ENCODE measurements at regions of chr7 and their contacts with region 1.

Region 1: DNA sequence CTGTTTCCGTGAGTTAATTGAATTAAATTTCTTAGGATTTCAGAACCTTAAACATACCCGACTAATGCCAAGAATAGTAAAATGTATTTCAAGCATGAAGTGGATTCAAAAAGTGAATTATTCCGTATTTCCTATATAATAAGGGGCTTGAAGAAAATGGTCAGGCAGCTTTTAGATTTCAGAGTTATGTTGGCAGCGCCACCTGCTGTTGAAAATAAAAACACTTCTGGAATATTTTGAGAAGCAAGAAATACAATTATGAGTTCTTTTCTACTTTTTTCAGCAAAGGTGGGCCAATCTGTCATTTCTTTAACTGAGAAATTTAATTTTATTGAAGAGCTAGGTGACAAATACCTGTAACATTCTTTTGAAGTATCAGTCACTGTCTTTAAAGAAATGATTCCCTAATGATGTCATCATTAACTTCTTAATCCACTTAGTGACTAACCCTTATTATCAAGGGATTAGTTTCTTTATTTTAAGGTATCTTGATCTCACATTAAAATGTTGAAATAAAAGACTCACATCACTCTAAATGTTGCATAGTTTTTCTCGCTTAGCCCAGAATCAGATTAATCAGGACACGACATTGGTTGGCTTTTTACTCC is 36.6 kb upstream of the AGR3 start:
- DNase-seq: peak in 4 of 14 experiments; percentile 29 to 51 (median 39)
- ATAC-seq: no peak
- H3K4me3 ChIP-seq: no peak overlapping the region
- H3K4me3 Mint-ChIP-seq: no peak overlapping the region
- H3K27ac ChIP-seq: no peak overlapping the region
- H3K27ac Mint-ChIP-seq: no peak overlapping the region
- H3K4me1 ChIP-seq: no peaks in the 10 kb centered on the region
- H3K4me1 Mint-ChIP-seq: peaks cover 8% of the 10 kb centered on the region
- H3K27me3 ChIP-seq: no peaks in the 10 kb centered on the region
- H3K27me3 Mint-ChIP-seq: no peaks in the 10 kb centered on the region
- CTCF ChIP-seq: peak; percentile 80

Region 2: DNA sequence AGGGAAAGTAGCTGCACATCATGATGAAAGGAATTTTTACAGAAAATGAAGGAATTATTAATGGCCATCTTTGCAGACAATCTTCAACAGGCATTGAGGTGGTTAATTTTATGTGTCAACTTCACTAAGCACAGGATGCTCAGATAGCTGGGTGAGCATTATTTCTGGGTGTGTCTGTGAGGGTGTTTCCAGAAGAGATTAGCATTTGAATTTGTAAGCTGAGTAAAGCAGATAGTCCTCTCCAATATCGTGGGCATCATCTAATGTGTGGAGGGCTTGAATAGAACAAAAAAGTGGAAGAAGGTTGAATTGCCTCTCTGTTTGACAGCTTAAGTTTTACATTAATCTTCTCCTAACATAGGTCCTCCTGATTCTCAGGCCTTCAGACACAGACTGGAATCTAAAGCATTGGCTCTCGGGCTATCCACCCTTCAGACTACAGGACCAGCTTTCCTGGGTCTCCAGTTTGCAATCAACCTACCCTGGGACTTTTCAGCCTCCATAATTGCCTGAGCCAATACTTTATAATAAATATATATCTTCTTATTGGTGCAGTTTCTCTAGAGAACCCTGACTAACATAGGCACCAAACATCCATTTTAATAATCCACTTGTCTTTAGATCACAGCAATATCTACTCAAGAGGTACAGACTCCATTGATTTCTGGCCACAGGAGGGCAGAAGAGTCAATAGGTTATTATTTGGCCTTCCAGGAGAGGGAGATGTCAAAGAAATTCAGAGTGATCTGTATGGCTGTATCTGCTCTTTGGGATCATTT is 486.6 kb before region 1 on chr7:
- CTCF ChIA-PET with region 1: no interaction called
- POLR2A ChIA-PET with region 1: no interaction called
- intact Hi-C with region 1: loop called in 1 of 2 experiments (anchors 5 kb)
- DNase-seq: peak in 6 of 14 experiments; percentile 1 to 62 (median 42)
- ATAC-seq: peak; percentile 81
- H3K4me3 ChIP-seq: no peak overlapping the region
- H3K4me3 Mint-ChIP-seq: no peak overlapping the region
- H3K27ac ChIP-seq: no peak overlapping the region
- H3K27ac Mint-ChIP-seq: no peak overlapping the region
- H3K4me1 ChIP-seq: no peaks in the 10 kb centered on the region
- H3K4me1 Mint-ChIP-seq: no peaks in the 10 kb centered on the region
- H3K27me3 ChIP-seq: no peaks in the 10 kb centered on the region
- H3K27me3 Mint-ChIP-seq: no peaks in the 10 kb centered on the region
- CTCF ChIP-seq: peak; percentile 60

Region 3: DNA sequence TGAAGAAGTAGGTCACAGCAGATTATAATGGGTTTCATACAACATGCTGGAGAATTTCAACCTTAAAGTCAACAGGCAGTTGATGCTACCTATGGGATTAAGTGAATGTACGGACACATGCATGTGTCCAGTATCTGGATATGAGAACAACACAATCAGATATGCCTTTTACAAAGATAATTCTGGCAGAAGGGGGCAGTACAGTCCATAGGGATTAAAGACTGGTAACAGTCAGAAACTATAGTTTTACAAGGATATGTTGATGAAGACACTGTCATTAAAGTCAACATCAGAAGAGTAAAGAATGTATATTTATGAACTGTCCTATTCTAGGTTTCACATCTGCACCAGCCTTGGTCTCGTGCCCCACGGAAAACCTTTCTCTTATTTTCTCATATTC is 314.3 kb before region 1 on chr7:
- CTCF ChIA-PET with region 1: no interaction called
- POLR2A ChIA-PET with region 1: no interaction called
- intact Hi-C with region 1: loop called in 1 of 2 experiments (anchors 2 kb)
- DNase-seq: peak in 2 of 14 experiments; percentile 9 to 11
- ATAC-seq: no peak
- H3K4me3 ChIP-seq: no peak overlapping the region
- H3K4me3 Mint-ChIP-seq: no peak overlapping the region
- H3K27ac ChIP-seq: no peak overlapping the region
- H3K27ac Mint-ChIP-seq: no peak overlapping the region
- H3K4me1 ChIP-seq: no peaks in the 10 kb centered on the region
- H3K4me1 Mint-ChIP-seq: no peaks in the 10 kb centered on the region
- H3K27me3 ChIP-seq: no peaks in the 10 kb centered on the region
- H3K27me3 Mint-ChIP-seq: no peaks in the 10 kb centered on the region
- CTCF ChIP-seq: no peak

Region 4: GRCh38 chr7:16695621-16696237 is 222.7 kb before region 1 on chr7:
- CTCF ChIA-PET with region 1: no interaction called
- POLR2A ChIA-PET with region 1: no interaction called
- intact Hi-C with region 1: loop called in 1 of 2 experiments (anchors 5 kb)
- DNase-seq: peak in 2 of 14 experiments; percentile 8 to 12
- ATAC-seq: no peak
- H3K4me3 ChIP-seq: no peak overlapping the region
- H3K4me3 Mint-ChIP-seq: no peak overlapping the region
- H3K27ac ChIP-seq: no peak overlapping the region
- H3K27ac Mint-ChIP-seq: no peak overlapping the region
- H3K4me1 ChIP-seq: no peaks in the 10 kb centered on the region
- H3K4me1 Mint-ChIP-seq: no peaks in the 10 kb centered on the region
- H3K27me3 ChIP-seq: no peaks in the 10 kb centered on the region
- H3K27me3 Mint-ChIP-seq: no peaks in the 10 kb centered on the region
- CTCF ChIP-seq: no peak

Region 5: GRCh38 chr7:16891338-16891737 is 27.1 kb before region 1 on chr7:
- CTCF ChIA-PET with region 1: interaction called, 5 read pairs
- POLR2A ChIA-PET with region 1: no interaction called
- intact Hi-C with region 1: loop called in 1 of 2 experiments (anchors 1 kb)
- DNase-seq: peak in 4 of 14 experiments; percentile 31 to 50 (median 47)
- ATAC-seq: peak; percentile 59
- H3K4me3 ChIP-seq: no peak overlapping the region
- H3K4me3 Mint-ChIP-seq: no peak overlapping the region
- H3K27ac ChIP-seq: no peak overlapping the region
- H3K27ac Mint-ChIP-seq: no peak overlapping the region
- H3K4me1 ChIP-seq: no peaks in the 10 kb centered on the region
- H3K4me1 Mint-ChIP-seq: peaks cover 5% of the 10 kb centered on the region
- H3K27me3 ChIP-seq: no peaks in the 10 kb centered on the region
- H3K27me3 Mint-ChIP-seq: no peaks in the 10 kb centered on the region
- CTCF ChIP-seq: no peak

Measured in CD4-positive, alpha-beta T cell (primary cell).